ENCODE measurements at regions of chr3 and their contacts with region 1.

Region 1: DNA sequence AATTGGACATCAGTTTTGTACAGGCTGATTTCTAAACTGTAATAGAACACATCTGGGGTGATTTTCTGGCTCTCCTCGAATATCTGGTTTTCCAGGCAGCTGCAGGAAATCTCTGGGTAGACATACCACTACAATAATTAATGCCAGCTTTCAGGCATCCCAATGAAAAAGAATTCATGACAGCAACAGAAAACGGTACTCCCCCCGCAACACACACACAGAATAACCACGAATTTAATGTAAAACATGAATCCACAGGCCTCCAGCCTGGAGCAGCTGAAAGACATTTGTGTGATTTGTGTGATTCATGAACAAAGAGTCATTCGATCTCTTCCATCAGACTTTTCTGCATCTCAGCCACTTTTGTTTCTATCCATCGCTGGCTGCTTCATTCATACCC is 262.2 kb downstream of the MAGI1 start:
- DNase-seq: no peak
- ATAC-seq: no peak
- H3K4me3 ChIP-seq: no peak overlapping the region
- H3K27ac ChIP-seq: no peak overlapping the region
- H3K4me1 ChIP-seq: peaks cover 4% of the 10 kb centered on the region
- H3K27me3 ChIP-seq: no peaks in the 10 kb centered on the region
- CTCF ChIP-seq: no peak
- POLR2A ChIP-seq: no peak

Region 2: DNA sequence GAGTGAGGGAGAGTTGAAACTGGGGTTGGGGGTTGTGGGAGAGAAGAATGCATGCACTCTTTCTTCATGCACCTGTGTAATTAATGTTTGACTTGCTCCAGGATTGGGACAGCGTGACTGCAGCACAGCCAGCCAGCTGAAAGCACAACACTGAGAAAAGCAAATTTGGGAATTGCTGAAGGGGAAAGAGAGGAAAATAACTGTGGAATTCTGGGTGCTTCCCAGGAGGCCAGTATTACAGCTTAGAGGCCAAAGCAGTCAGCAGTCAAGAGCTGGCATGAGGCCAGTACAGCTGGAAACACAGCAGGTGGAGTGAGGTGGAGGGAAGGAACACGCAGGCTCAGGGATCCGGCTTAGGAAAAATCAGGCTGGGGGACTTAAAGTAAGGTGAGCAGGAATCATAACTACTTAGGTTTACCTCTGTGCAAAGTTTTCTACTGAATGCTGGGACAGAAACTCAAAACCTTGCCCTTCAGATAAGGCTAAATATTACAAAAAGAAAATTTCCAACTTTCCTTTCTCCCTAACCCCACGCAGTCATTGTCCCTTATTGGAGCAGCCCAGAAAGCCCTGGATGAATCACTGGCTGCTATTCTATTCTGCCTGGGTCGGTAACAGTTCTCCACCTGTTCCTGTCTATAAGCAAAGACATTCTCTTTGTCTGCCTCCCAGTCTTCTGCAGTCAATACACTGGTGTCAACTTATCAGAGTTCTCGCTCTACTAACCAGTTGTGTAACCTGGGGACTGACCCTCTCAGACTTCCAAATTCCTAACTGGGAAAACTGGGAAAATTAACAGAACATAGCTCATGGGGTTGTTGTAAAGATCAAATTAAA is 95.0 kb after region 1 on chr3:
- intact Hi-C with region 1: no loop called
- DNase-seq: peak; percentile 85 to 93 (median 90)
- ATAC-seq: peak; percentile 83
- H3K4me3 ChIP-seq: no peak overlapping the region
- H3K27ac ChIP-seq: peak overlapping the region; percentile 4 to 62 (median 56)
- H3K4me1 ChIP-seq: peaks cover 38% of the 10 kb centered on the region
- H3K27me3 ChIP-seq: no peaks in the 10 kb centered on the region
- CTCF ChIP-seq: no peak
- POLR2A ChIP-seq: no peak

Region 3: GRCh38 chr3:66140743-66141372 is 364.4 kb after region 1 on chr3:
- intact Hi-C with region 1: loop called (anchors 10 kb)
- DNase-seq: no peak
- ATAC-seq: no peak
- H3K4me3 ChIP-seq: no peak overlapping the region
- H3K27ac ChIP-seq: no peak overlapping the region
- H3K4me1 ChIP-seq: no peaks in the 10 kb centered on the region
- H3K27me3 ChIP-seq: no peaks in the 10 kb centered on the region
- CTCF ChIP-seq: no peak
- POLR2A ChIP-seq: no peak